ENCODE measurements at regions of chr15 and their contacts with region 1.

Region 1: GRCh38 chr15:59622289-59622688 is 10.7 kb downstream of the GCNT3 start:
- DNase-seq: peak; percentile 79
- H3K4me3 ChIP-seq: no peak overlapping the region
- H3K27ac ChIP-seq: no peak overlapping the region
- H3K4me1 ChIP-seq: no peaks in the 10 kb centered on the region
- H3K27me3 ChIP-seq: peaks cover 0 to 9% (median 0%) of the 10 kb centered on the region in 7 donors
- CTCF ChIP-seq: peak in 7 of 11 experiments; percentile 5 to 51 (median 32)
- POLR2A ChIP-seq: no peak

Region 2: GRCh38 chr15:59553879-59554735 is 68.2 kb before region 1 on chr15:
- intact Hi-C with region 1: loop called (anchors 10 kb)
- DNase-seq: no peak
- H3K4me3 ChIP-seq: no peak overlapping the region
- H3K27ac ChIP-seq: no peak overlapping the region
- H3K4me1 ChIP-seq: no peaks in the 10 kb centered on the region
- H3K27me3 ChIP-seq: no peaks in the 10 kb centered on the region
- CTCF ChIP-seq: no peak
- POLR2A ChIP-seq: no peak